Endothelial cell of umbilical vein (primary cell): ENCODE measurements at regions of chr5 and their contacts with region 1.

Region 1: DNA sequence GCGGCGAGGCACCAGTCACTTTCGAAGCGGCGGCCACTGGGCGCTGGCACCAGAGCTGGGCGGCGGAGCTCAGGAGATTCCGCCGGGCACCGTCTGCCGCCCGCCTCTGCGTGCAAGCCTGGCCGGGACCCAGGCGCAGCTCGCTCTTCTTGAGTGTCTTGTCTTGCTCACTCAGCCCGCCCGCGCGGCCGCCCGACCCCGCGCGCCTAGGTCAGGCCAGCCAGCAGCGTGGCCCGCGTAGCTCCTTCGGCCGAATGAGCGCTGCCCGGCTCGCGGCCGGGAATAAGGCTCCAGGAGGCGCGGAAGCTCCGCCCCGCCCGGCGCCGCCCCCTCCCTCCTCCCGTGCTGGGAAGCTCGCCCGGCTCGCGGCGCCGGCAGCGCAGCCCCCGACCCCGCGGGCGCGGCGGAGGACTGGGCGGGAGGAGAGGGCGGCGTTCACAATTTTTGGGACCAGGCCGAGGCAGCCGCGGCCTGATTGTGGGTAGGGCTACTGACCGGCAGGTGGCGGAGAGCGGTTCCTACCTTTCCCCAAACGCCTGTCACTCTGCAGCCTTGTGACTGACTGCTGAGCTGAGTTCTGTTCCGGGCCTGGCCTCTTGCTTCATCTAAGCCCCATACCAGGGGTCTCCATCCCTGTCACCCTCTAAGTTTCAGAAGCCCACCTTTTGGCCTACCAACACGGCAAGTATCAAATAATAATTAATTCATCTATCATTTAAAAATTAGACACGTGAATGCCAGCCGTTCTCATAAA is at the start of gene HBEGF:
- DNase-seq: peak; percentile 84
- H3K4me3 ChIP-seq: peak within 1 kb of the TSS; percentile 72 to 86 (median 81)
- H3K27ac ChIP-seq: peak within 1 kb of the TSS; percentile 81
- H3K4me1 ChIP-seq: peaks cover 55% of the 10 kb centered on the region
- H3K27me3 ChIP-seq: no peaks in the 10 kb centered on the region
- CTCF ChIP-seq: peak; percentile 21 to 41
- POLR2A ChIP-seq: peak; percentile 98
- total RNA-seq, gene HBEGF: 33.2 and 35.3 TPM in 2 replicates

Region 2: DNA sequence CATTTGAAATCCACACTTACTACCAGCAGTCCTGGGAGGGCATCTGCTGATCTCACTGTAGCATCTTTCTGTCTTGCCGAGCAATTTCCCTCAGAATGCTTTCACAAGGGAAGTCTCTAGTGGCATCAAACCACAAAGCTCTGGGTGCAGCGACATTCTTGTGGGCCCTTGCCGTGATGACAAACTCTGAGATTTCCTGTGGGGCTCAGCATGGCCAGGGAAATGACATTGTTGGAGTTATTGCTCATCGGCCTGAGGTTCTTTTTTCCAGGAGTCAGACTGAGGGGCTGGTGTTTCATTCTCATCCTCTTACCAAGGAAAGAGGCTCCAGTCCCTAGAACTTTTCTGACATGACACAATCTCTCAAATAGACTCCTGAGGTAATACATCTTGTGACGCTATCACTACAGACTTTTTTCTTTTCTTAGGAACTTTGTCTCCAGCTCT is 95.0 kb before region 1 on chr5:
- CTCF ChIA-PET with region 1: interaction called, 1,214 read pairs
- POLR2A ChIA-PET with region 1: interaction called, 112 read pairs
- dilution Hi-C with region 1: no loop called
- intact Hi-C with region 1: no loop called
- DNase-seq: peak; percentile 89
- H3K4me3 ChIP-seq: peak overlapping the region in 1 of 3 experiments; percentile 32
- H3K27ac ChIP-seq: peak overlapping the region; percentile 97
- H3K4me1 ChIP-seq: peaks cover 61% of the 10 kb centered on the region
- H3K27me3 ChIP-seq: no peaks in the 10 kb centered on the region
- CTCF ChIP-seq: no peak
- POLR2A ChIP-seq: peak; percentile 67

Region 3: DNA sequence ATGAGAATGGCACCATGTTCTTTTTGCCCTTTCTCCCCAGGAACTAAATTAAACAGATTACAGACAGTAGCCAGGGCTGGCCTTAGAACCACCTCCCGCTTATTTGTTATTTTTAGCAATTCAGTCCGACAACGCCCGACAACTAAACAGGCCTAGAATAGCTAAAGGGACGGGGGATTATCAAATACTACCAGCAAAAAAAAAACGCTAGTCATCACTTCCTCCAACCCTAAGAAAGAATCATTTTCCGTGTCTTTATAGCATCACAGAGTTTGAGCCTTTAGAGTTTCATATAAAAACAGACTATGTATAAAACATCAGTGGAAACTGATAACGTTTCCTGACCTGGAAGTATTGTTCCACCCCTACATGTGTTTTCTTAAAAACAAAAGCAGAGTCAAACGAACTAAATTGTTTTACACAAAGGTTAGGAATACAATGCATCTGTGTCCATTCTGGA is 78.9 kb before region 1 on chr5:
- CTCF ChIA-PET with region 1: interaction called, 58 read pairs
- POLR2A ChIA-PET with region 1: interaction called, 10 read pairs
- dilution Hi-C with region 1: no loop called
- intact Hi-C with region 1: loop called (anchors 1 kb)
- DNase-seq: peak; percentile 92
- H3K4me3 ChIP-seq: peak overlapping the region in 1 of 3 experiments; percentile 37
- H3K27ac ChIP-seq: peak overlapping the region; percentile 84
- H3K4me1 ChIP-seq: peaks cover 24% of the 10 kb centered on the region
- H3K27me3 ChIP-seq: no peaks in the 10 kb centered on the region
- CTCF ChIP-seq: no peak
- POLR2A ChIP-seq: no peak

Region 4: GRCh38 chr5:140295414-140295813 is 51.1 kb before region 1 on chr5:
- CTCF ChIA-PET with region 1: interaction called, 20 read pairs
- POLR2A ChIA-PET with region 1: interaction called, 13 read pairs
- dilution Hi-C with region 1: no loop called
- intact Hi-C with region 1: loop called (anchors 1 kb)
- DNase-seq: peak; percentile 96
- H3K4me3 ChIP-seq: no peak overlapping the region
- H3K27ac ChIP-seq: peak overlapping the region; percentile 85
- H3K4me1 ChIP-seq: peaks cover 77% of the 10 kb centered on the region
- H3K27me3 ChIP-seq: no peaks in the 10 kb centered on the region
- CTCF ChIP-seq: no peak
- POLR2A ChIP-seq: no peak

Region 5: GRCh38 chr5:140312067-140312790 is 34.3 kb before region 1 on chr5:
- CTCF ChIA-PET with region 1: interaction called, 41 read pairs
- POLR2A ChIA-PET with region 1: interaction called, 33 read pairs
- dilution Hi-C with region 1: no loop called
- intact Hi-C with region 1: loop called (anchors 1 kb)
- DNase-seq: peak; percentile 99
- H3K4me3 ChIP-seq: peak overlapping the region in 2 of 3 experiments; percentile 10 to 18
- H3K27ac ChIP-seq: peak overlapping the region; percentile 98
- H3K4me1 ChIP-seq: peaks cover 40% of the 10 kb centered on the region
- H3K27me3 ChIP-seq: no peaks in the 10 kb centered on the region
- CTCF ChIP-seq: no peak
- POLR2A ChIP-seq: peak; percentile 65

Region 6: DNA sequence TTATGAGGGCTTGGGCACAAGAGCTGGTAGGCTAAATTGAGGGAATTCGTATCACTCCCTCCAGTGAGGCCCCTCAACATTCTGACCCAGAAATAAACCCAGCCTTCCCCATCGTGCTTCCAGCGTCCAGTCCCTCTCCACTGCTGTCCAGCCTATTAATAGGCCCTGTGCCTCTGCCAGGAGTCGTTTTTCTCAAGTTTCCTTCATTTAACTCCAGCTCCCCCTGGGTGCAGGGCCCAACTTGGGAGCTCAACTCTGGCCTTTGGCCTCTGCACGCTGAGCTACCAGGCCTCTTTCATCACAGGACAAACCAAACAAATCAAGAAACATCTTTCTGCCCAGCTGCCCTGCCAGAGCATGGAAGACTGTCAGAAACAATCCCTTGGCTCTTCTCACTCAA is 10.1 kb before region 1 on chr5:
- CTCF ChIA-PET with region 1: interaction called, 18 read pairs
- POLR2A ChIA-PET with region 1: interaction called, 9 read pairs
- dilution Hi-C with region 1: no loop called
- intact Hi-C with region 1: no loop called
- DNase-seq: no peak
- H3K4me3 ChIP-seq: no peak overlapping the region
- H3K27ac ChIP-seq: peak overlapping the region; percentile 21
- H3K4me1 ChIP-seq: peaks cover 13% of the 10 kb centered on the region
- H3K27me3 ChIP-seq: no peaks in the 10 kb centered on the region
- CTCF ChIP-seq: no peak
- POLR2A ChIP-seq: no peak

Region 7: GRCh38 chr5:140362860-140363630 is 16.5 kb after region 1 on chr5:
- CTCF ChIA-PET with region 1: interaction called, 19 read pairs
- POLR2A ChIA-PET with region 1: interaction called, 3 read pairs
- dilution Hi-C with region 1: no loop called
- intact Hi-C with region 1: no loop called
- DNase-seq: peak; percentile 61
- H3K4me3 ChIP-seq: peak overlapping the region in 2 of 3 experiments; percentile 20 to 24
- H3K27ac ChIP-seq: no peak overlapping the region
- H3K4me1 ChIP-seq: peaks cover 3% of the 10 kb centered on the region
- H3K27me3 ChIP-seq: no peaks in the 10 kb centered on the region
- CTCF ChIP-seq: peak; percentile 97 to 98
- POLR2A ChIP-seq: no peak

Region 8: DNA sequence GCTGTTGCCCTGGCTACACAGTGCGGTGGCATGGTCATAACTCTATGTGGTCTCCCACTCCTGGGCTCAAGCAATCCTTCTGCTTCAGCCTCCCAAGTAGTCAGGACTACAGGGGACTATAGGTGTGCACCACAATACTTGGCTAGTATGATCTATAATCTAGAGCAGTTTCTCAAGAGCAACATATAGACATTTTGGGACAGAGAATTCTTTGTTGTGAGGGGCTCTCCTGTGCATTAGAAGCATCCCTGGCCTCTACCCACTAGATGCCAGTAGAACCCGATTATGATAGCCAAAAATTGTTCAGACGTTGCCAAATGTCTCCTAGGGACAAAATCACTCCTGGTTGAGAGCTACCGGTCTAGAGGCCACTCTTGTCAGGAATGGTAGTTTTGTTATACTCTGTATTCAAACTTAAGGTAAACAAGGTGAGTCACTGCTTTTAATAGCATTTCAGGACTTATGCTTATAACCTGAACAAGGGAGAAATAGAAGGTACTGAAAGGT is 62.3 kb after region 1 on chr5:
- CTCF ChIA-PET with region 1: no interaction called
- POLR2A ChIA-PET with region 1: no interaction called
- dilution Hi-C with region 1: no loop called
- intact Hi-C with region 1: no loop called
- DNase-seq: no peak
- H3K4me3 ChIP-seq: no peak overlapping the region
- H3K27ac ChIP-seq: no peak overlapping the region
- H3K4me1 ChIP-seq: no peaks in the 10 kb centered on the region
- H3K27me3 ChIP-seq: no peaks in the 10 kb centered on the region
- CTCF ChIP-seq: no peak
- POLR2A ChIP-seq: no peak